ENCODE measurements at regions of chr1 and their contacts with region 1.

Region 1: DNA sequence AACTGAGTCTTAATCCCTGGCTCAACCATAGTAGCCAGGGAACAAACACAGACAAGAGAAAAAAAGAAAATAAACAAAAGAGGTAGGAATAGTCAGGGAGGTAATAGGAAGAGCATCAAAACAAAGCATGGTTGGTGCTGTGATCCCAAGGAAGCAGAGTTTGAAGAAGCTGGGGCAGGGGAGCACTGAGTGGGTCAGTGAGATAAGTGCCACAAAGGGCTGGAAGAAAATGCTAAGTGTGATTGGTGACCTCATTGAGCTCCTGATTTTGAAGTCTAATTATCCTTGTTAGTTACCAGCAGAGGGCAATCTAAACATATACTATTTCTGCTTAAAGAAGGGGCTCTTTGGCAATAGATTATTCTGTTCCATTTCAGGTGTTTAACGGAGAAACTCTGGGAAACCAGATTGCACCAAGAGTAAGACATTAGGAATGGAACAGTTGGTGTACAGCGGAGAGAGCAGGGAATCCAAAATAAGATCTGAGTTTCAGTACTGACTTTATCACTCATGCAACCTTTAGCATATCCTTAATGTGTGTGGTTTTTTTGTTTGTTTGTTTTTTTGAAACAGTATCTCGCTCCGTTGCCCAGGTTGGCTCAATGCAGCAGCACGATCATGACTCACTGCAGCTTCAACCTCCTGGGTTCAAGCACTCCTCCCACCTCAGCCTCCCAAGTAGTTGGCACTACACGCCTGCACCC is 30.7 kb upstream of the KIAA1614 start:
- DNase-seq: no peak
- ATAC-seq: peak; percentile 86
- H3K4me3 Mint-ChIP-seq: no peak overlapping the region
- H3K27ac Mint-ChIP-seq: peak overlapping the region; percentile 76
- H3K4me1 Mint-ChIP-seq: peaks cover 4% of the 10 kb centered on the region; the same call in 1 of the 2 replicates
- H3K27me3 Mint-ChIP-seq: no peaks in the 10 kb centered on the region
- CTCF ChIP-seq: no peak

Region 2: DNA sequence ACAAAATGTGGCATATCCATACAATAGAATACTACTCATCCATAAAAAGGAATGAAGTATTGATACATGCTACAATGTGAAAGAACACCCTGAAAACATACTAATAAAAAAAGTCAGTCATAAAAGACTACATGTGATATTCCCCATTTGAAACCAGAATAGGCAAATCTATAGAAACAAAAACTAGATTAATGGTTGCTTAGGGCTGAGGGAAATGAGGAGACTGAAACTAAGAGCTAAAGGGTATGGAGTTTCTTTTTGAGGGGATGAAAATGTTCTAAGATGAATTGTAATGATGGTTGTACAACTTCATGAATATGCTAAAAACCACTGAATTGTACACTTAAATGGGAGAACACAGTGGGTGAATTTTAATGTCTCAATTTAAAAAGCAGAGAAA is 430.5 kb before region 1 on chr1:
- CTCF ChIA-PET with region 1: no interaction called
- POLR2A ChIA-PET with region 1: no interaction called
- DNase-seq: no peak
- ATAC-seq: no peak
- H3K4me3 Mint-ChIP-seq: no peak overlapping the region
- H3K27ac Mint-ChIP-seq: no peak overlapping the region
- H3K4me1 Mint-ChIP-seq: peaks cover 5% of the 10 kb centered on the region; the same call in 1 of the 2 replicates
- H3K27me3 Mint-ChIP-seq: no peaks in the 10 kb centered on the region
- CTCF ChIP-seq: no peak

Region 3: DNA sequence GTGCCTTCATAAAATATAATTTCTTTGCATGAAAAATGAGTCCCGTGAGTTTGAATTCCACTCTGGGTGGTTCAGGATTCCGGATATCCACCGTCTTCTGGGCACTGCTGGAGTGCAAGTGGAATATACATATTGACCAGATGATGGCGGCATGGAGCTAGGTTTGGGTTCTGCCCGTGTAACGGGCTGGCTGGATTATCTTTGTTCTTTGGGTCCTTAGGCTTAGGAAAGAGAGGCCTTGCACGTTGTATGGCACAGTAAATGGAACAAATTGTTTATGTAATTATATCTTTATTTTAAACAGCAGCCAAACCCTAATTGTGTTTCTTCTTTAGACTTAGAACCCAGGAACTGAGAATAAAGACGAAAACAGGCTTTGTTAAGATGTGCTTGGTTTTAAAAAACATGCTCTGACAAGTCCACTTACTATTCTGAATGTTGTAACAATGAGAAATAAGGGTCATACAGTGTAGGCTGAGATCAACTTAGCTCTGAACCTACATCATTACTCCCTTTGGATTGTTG is 366.0 kb before region 1 on chr1:
- CTCF ChIA-PET with region 1: interaction called, 13 read pairs
- POLR2A ChIA-PET with region 1: interaction called, 8 read pairs
- DNase-seq: peak; percentile 66
- ATAC-seq: peak; percentile 96
- H3K4me3 Mint-ChIP-seq: no peak overlapping the region
- H3K27ac Mint-ChIP-seq: no peak overlapping the region
- H3K4me1 Mint-ChIP-seq: peaks cover 32% of the 10 kb centered on the region
- H3K27me3 Mint-ChIP-seq: no peaks in the 10 kb centered on the region; the same call in 1 of the 2 replicates
- CTCF ChIP-seq: peak; percentile 53; the same call in 1 of the 2 replicates

Region 4: DNA sequence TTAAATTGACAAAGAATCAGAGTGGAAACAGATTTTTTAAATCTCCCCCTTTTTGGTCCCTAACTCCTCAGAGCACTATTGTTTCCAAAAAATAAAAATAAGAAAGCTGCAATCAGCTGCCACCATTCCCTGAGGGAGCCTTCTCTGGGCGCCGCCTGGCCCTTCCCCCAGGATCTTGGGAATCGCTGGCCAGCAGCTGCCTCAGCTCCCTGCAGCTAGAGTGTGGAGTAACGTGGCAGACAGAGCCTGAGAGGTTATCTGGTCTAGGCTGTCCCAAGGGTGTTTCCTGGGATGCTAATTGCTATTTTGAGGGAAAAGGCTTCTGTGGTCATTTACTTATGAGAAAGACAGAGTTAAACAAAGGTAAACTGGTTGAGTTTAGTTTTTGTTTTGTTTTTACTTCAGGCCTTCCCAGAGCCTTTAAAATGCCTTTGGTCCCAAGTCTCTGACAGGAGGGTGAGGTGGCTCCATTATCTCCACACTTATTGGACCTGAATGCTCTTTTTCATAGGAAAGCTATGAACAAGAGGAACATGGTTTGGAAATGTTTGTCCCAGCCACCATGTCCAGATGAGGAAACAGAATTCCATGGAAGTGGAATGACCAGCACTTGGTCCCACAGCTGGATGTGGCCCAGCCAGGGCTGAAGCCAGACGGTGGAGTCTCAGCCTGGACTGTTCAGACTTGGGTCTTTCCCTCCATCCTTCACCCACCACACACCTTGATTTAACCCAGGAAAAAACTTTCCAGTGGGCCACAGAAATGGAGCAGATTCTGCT is 16.7 kb after region 1 on chr1:
- CTCF ChIA-PET with region 1: interaction called, 27 read pairs
- POLR2A ChIA-PET with region 1: no interaction called
- DNase-seq: no peak
- ATAC-seq: peak; percentile 71
- H3K4me3 Mint-ChIP-seq: no peak overlapping the region
- H3K27ac Mint-ChIP-seq: no peak overlapping the region
- H3K4me1 Mint-ChIP-seq: peaks cover 24% of the 10 kb centered on the region
- H3K27me3 Mint-ChIP-seq: no peaks in the 10 kb centered on the region; the same call in 1 of the 2 replicates
- CTCF ChIP-seq: no peak

Region 5: DNA sequence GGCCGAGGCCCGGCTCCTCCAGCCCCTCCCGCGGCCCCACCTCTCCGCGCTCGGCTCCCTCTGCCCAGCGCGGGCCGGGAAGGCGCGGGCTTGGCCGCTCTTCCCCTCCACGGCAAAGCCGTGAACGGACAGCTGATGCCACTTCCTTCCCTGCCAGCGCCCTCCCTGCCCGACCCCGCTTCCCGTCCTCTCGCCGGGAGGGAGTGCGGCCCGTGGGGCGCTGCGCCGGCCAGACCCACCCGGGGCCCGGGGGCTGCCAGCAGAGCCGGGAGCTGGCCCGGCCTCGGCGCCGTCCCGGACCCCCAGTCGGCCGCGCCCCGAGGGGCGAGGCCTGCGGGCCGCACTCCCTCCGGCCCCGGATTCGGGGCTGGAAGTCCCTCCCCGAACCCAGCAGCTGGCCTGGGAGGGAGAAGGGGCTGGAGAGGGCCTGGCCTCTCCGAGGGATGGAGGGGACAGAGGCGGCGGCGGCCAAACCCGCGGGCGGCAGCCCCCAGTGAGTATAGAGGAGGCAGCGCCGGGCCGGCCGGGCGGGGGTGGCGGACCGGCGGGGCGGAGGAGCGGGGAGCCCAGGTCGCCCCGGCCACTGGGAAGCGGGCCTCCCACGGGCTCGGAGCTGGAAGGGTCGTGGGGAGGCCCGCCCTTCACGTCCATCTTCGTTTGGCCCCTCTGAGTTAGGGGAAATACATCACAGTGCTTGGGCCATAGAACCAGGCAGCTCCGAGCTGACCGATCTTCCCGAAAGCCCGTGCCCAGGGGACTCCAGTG is 31.0 kb after region 1 on chr1 and contains the start of gene KIAA1614:
- CTCF ChIA-PET with region 1: interaction called, 42 read pairs
- POLR2A ChIA-PET with region 1: no interaction called
- DNase-seq: peak; percentile 58
- ATAC-seq: peak; percentile 49
- H3K4me3 Mint-ChIP-seq: peak within 1 kb of the TSS; percentile 79
- H3K27ac Mint-ChIP-seq: no peak within 1 kb of the TSS
- H3K4me1 Mint-ChIP-seq: peaks cover 39% of the 10 kb centered on the region
- H3K27me3 Mint-ChIP-seq: peaks cover 41% of the 10 kb centered on the region
- CTCF ChIP-seq: no peak
- total RNA-seq, gene KIAA1614: 1.8 to 3.3 TPM (median 2.1 TPM) in 3 replicates

Region 6: DNA sequence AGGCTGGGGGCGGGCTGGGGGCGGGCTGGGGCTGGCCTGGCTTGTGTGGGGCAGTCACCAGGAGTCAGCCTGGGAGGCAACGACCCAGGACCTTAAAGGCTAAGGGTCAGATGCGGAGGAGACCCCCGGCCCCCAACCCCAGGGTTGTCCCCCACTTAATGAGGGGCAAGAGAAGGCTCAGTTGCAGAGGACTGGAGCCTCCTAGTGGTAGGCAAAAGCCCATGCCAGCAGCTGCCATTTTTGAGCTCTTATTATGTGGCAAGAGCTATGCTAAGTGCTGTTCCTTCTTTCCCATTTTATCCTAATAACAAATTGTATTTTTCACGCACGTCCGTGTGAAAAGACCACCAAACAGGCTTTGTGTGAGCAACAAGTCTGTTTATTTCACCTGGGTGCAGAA is 38.7 kb after region 1 on chr1:
- CTCF ChIA-PET with region 1: interaction called, 44 read pairs
- POLR2A ChIA-PET with region 1: interaction called, 6 read pairs
- DNase-seq: no peak
- ATAC-seq: no peak
- H3K4me3 Mint-ChIP-seq: no peak overlapping the region
- H3K27ac Mint-ChIP-seq: no peak overlapping the region
- H3K4me1 Mint-ChIP-seq: peaks cover 48% of the 10 kb centered on the region
- H3K27me3 Mint-ChIP-seq: peaks cover under 1% of the 10 kb centered on the region; the same call in 1 of the 2 replicates
- CTCF ChIP-seq: peak; percentile 33

Region 7: DNA sequence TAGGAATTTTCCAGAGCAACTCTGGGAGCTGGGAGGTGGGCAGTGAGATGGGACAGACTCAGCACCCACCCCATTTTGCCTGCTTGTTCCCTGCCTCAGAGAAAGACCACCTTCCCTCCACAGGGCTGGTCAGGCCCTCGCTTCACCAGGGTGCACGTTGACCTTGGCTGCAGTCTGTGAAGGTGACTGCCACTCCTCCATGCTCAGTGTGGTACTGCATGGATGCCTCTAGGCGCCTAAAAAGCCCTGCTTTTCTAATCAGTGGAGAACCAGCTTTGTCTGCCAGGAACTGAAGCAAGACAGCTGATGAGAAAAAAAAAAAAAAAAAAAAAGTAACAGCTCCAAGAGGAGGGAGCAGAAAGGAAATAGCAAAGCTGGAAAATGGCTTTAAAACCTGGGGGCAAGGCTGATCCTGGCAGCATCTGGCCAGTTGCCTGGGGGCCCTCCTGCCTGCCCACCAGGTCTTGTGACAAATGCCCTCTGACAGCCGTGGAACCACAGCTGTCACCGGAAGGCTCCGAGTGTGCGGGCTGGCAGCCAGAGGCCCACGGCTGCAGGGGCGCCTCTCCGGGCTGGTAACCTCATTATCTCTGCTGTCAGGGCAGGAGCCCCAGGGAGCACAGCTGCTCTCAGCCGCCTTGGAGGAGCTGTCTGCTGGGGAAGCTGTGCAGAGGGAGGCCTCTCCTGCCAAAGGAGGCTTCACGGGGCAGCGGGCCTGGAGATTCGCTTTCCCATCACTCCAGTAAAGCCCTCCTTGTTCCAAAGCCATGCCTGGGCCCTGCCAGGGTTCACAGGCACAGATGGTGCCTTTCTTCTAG is 44.4 kb after region 1 on chr1:
- CTCF ChIA-PET with region 1: interaction called, 22 read pairs
- POLR2A ChIA-PET with region 1: interaction called, 6 read pairs
- DNase-seq: no peak
- ATAC-seq: no peak
- H3K4me3 Mint-ChIP-seq: no peak overlapping the region
- H3K27ac Mint-ChIP-seq: no peak overlapping the region; the same call in 1 of the 2 replicates
- H3K4me1 Mint-ChIP-seq: peaks cover 69% of the 10 kb centered on the region
- H3K27me3 Mint-ChIP-seq: no peaks in the 10 kb centered on the region
- CTCF ChIP-seq: no peak

Region 8: GRCh38 chr1:180954005-180954800 is 72.2 kb after region 1 on chr1:
- CTCF ChIA-PET with region 1: interaction called, 11 read pairs
- POLR2A ChIA-PET with region 1: no interaction called
- DNase-seq: peak; percentile 31
- ATAC-seq: peak; percentile 18
- H3K4me3 Mint-ChIP-seq: no peak overlapping the region; the same call in 1 of the 2 replicates
- H3K27ac Mint-ChIP-seq: peak overlapping the region; percentile 43; the same call in 1 of the 2 replicates
- H3K4me1 Mint-ChIP-seq: peaks cover 17% of the 10 kb centered on the region
- H3K27me3 Mint-ChIP-seq: no peaks in the 10 kb centered on the region
- CTCF ChIP-seq: no peak